ENCODE measurements at regions of chr1 and their contacts with region 1.

Region 1: DNA sequence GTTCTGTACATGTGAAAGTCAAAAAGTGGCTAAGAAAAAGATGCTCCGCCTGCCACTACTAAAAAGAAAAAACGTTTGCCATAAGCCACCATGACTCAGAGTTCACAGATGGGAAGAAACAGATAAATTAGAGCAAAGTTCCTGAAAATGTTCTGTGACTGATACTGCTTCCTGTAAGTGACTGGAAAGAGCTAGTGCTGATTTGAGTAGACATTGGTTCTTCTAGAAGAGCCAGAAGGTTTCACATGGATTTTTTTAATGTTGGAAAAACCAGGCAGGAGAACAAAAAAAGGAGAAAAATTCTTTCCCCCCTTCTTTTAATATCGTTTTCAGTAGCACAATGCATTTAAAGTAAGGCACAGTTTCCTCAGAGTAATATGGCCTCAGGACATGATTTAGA is 221.4 kb downstream of the HLX start:
- DNase-seq: no peak
- H3K4me3 Mint-ChIP-seq: no peak overlapping the region
- H3K27ac Mint-ChIP-seq: peak overlapping the region; percentile 39
- H3K4me1 Mint-ChIP-seq: peaks cover 5% of the 10 kb centered on the region
- H3K27me3 Mint-ChIP-seq: no peaks in the 10 kb centered on the region

Region 2: DNA sequence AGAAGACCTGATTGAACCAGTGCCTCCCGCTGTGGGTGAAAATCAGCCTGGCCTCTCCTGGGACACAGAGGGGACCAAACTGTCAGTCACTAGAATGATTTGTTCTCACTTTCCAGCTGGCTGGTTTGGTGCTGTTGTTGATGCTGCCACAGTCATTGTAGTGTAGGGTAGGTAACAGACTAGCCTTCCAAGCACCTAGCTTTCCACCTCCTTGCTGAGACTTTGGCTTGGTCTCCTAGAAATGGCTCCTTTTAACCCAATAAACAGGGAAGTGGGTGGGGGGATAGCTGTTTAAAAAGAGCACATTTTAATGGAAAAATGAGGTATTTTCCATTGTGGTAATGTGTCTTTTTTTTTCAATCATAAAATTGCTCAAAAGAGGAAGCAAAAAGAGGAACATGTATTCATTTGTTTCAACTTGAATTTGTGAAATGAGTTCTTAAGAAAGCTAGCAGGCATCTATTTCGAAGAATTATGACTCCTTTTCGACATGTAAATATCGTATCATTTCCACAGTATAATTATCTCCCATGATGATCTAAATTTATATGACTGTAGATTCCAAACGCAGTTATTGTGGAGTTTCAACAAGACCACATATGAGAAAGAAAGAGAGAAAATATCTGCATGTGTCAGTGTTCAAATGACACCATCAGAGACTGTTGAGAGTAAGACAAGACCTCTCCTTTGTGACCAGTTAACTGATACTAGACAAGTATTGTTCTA is 31.3 kb before region 1 on chr1:
- intact Hi-C with region 1: loop called (anchors 2 kb)
- DNase-seq: no peak
- H3K4me3 Mint-ChIP-seq: no peak overlapping the region
- H3K27ac Mint-ChIP-seq: peak overlapping the region; percentile 78
- H3K4me1 Mint-ChIP-seq: peaks cover 4% of the 10 kb centered on the region
- H3K27me3 Mint-ChIP-seq: no peaks in the 10 kb centered on the region

Region 3: DNA sequence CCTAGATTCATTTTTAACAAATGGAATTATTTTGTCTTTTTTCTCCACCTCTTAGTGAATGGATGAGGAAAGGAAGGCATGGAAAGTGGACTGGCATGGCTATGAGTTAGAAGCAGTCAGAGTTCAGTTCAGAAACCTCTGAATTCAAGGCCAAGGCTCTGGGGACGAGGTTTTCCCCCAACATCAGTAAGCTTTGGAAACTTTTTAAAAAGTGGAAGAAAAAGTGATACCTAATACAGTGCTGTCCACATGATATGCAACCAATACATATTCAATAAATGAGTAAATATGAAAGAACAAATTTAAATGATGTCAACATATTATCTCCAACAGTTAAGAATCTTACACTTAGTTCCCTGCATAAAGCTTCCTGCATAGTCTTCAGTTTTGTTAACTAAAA is 16.7 kb before region 1 on chr1:
- intact Hi-C with region 1: no loop called
- DNase-seq: no peak
- H3K4me3 Mint-ChIP-seq: no peak overlapping the region
- H3K27ac Mint-ChIP-seq: no peak overlapping the region
- H3K4me1 Mint-ChIP-seq: peaks cover 2% of the 10 kb centered on the region
- H3K27me3 Mint-ChIP-seq: no peaks in the 10 kb centered on the region

Region 4: DNA sequence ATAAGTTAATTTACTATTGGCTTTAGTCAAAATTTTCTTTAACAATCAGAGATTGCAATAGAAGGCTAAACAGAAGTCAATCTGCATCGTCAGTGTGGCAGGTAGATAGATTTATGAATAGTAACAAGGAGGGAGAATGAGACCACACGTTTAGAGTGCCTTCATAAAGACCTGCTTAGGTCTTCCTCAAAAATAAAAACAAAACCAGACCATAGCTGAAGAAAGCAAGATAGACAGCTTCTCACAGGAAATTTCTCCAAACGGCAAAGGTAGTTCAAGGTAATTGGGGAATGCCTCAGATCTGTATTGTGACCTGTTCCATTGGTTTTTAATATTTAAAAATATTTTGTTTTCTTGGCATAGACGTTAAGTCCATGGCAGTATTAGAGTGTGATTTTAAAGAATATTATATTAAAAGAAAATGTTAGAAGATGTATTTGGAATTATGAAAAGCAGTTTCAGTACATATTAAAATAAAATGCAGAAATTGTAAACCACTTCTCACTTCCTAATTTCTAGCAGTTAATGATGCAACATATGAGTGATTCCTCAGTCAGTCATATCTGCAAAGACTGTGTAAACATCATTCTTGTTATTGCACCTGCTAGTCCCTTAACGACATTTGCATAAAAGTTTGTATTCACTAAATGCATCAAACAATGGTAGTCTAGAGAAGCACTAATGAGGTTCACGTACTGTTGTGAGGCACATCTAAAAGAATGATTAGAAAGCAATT is 56.6 kb after region 1 on chr1:
- intact Hi-C with region 1: no loop called
- DNase-seq: no peak
- H3K4me3 Mint-ChIP-seq: no peak overlapping the region
- H3K27ac Mint-ChIP-seq: no peak overlapping the region
- H3K4me1 Mint-ChIP-seq: no peaks in the 10 kb centered on the region
- H3K27me3 Mint-ChIP-seq: no peaks in the 10 kb centered on the region

Region 5: DNA sequence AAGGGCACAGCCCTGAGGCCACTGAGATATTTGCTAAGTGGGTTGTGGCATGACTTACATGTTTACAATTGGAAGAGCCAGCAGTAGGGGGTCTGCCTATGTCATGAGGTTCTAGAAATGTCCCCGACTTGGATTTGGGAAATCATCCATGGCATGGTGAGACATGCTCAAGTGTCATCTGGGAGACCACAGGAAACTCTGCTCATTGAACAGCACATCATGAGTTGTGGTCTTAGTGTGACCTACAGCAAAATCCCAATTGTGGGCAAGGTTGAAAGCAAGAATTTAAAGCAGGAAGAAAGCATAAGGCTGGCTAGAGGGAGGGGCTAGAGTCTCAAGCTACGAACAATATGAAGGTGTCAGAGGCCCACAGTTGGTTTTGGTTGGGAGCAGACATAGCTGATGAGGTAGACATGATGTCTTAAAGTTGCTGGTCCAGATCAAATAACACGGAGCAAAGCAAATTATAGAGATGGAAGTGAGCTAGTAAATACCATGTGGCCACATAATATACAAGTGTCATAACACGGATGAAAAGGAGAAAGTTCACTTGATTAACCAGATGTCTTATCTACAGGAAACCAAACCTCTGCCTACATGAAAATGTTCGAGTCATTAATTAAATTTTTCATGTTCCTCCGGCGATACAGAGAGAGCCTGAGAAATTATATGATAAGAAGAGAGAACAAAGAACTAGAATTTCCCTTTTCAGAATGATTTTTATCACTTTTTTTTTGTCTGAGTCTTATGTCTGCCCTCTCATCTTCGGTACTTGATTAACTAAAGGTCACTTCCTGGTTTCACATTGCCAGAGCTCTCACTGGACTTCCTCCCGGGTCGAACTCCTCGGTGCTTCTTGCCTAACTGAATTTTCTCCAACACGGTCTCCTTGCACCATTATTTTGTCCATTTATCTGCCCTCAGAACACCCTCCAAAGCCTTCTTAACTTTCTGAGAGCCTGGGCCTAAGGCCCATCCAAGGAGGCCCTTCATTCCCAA is 708.7 kb after region 1 on chr1:
- intact Hi-C with region 1: no loop called
- DNase-seq: peak; percentile 54
- H3K4me3 Mint-ChIP-seq: peak overlapping the region; percentile 6
- H3K27ac Mint-ChIP-seq: peak overlapping the region; percentile 67
- H3K4me1 Mint-ChIP-seq: peaks cover 32% of the 10 kb centered on the region
- H3K27me3 Mint-ChIP-seq: no peaks in the 10 kb centered on the region

Measured in activated CD4-positive, alpha-beta T cell treated with anti-CD3 and anti-CD28 coated beads, Interleukin-2, amount 10 ng/mL, durations not matched to agents 24 days and 14 days (primary cell).